ENCODE measurements at regions of chr2 and their contacts with region 1.

Region 1: DNA sequence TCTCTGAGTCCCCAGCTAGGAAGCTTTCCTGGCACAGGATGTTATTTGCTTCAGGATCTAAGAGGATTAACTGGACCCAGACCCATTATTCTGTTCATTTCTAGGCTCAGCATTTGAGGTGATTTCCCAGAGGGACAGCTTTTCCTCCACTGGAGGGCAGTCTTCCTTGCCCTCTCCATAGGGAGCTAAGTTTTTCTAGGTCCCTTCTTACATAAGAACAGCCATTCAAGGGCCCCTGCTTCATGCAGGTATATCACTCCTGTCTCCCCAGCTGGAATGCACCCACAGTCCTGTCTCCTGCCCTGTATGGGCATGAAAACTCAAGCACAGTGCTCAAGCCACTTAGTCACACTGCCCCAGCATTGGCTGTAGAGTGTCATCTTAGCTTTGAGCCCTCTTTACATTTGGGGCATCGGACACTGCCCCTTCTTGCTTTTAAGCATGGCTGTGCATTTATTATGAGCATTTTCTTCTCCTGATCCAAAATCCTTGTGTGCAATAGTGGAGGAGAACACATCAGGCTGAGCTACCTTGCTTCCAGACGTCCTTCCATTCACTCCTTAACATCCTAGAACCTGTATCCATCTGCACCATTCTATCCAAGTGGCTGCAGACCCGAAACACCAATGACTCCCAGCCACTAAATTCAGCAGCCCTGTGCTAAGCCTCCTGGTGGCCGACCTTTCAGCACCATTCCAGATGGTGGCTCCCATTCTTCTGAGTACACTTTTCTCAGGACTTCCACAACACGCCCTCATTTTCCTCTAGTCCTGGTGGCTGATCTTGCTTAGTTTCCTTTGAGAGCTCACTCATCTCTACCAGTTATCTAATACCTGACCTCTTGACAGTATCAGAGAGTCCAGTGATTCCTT is 80.0 kb downstream of the COPS8 start:
- DNase-seq: no peak
- H3K4me3 ChIP-seq: no peak overlapping the region
- H3K27ac ChIP-seq: no peak overlapping the region
- H3K4me1 ChIP-seq: no peaks in the 10 kb centered on the region
- H3K27me3 ChIP-seq: no peaks in the 10 kb centered on the region
- CTCF ChIP-seq: peak; percentile 82

Region 2: GRCh38 chr2:237555560-237555959 is 389.9 kb after region 1 on chr2:
- CTCF ChIA-PET with region 1: interaction called, 10 read pairs
- POLR2A ChIA-PET with region 1: no interaction called
- intact Hi-C with region 1: no loop called
- DNase-seq: no peak
- H3K4me3 ChIP-seq: no peak overlapping the region
- H3K27ac ChIP-seq: no peak overlapping the region
- H3K4me1 ChIP-seq: no peaks in the 10 kb centered on the region
- H3K27me3 ChIP-seq: no peaks in the 10 kb centered on the region
- CTCF ChIP-seq: no peak

Measured in PC-9 (cell line).